ENCODE measurements at regions of chr2 and their contacts with region 1.

Region 1: DNA sequence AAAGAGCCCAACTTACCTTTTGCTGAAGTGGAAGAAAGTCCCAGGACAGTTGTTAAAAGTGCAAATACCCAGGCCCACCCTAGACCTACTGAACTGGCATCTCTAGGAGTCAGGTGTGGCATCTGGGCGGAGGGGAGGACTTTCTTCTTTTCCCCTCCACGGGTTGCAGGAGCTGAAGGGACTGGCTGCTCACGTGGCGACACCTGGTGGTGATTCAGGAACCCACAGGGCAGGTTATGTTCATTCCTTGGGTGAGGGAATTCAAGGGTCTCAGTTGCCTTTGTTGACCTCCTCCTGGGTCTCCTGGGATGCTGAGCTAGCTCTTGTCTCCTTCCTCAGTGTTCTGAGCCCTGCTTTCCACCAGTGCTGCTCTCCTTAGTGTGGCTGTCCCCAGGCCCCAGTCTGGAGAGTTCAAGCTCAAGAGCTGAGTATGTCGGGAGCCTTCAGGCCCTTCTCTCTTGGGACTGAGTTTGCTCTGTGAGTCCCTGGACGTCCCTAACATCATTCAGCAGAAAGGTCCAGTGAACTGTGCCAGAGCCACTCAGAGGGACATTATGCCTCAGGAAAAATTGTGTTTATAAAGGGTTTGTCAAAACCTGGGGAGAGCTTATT is 56.9 kb downstream of the DYSF start:
- DNase-seq: peak; percentile 35
- H3K4me3 ChIP-seq: no peak overlapping the region
- H3K27ac ChIP-seq: no peak overlapping the region
- H3K4me1 ChIP-seq: no peaks in the 10 kb centered on the region
- H3K27me3 ChIP-seq: no peaks in the 10 kb centered on the region
- CTCF ChIP-seq: peak; percentile 80 to 95

Region 2: DNA sequence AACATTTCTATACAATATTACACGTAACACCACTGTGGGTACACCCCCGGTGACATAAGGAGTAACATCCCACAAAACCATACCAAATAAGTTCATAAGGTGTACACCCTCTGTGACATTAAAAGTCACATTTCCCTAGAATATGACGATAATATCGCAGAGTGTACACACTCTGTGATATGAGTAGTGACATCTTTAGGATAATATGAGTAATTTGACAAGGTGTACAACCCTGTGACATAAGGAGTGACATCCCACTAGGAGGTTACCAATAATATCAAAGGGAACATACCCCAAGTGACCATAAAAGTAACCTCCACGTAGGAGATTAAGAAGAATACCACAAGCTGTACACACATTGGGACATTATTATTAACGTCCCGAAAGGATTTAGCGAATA is 491.7 kb before region 1 on chr2:
- CTCF ChIA-PET with region 1: no interaction called
- dilution Hi-C with region 1: no loop called
- in situ Hi-C with region 1: no loop called
- intact Hi-C with region 1: loop called (anchors 5 kb)
- DNase-seq: no peak
- H3K4me3 ChIP-seq: no peak overlapping the region
- H3K27ac ChIP-seq: no peak overlapping the region
- H3K4me1 ChIP-seq: peaks cover 6% of the 10 kb centered on the region
- H3K27me3 ChIP-seq: no peaks in the 10 kb centered on the region
- CTCF ChIP-seq: no peak

Region 3: DNA sequence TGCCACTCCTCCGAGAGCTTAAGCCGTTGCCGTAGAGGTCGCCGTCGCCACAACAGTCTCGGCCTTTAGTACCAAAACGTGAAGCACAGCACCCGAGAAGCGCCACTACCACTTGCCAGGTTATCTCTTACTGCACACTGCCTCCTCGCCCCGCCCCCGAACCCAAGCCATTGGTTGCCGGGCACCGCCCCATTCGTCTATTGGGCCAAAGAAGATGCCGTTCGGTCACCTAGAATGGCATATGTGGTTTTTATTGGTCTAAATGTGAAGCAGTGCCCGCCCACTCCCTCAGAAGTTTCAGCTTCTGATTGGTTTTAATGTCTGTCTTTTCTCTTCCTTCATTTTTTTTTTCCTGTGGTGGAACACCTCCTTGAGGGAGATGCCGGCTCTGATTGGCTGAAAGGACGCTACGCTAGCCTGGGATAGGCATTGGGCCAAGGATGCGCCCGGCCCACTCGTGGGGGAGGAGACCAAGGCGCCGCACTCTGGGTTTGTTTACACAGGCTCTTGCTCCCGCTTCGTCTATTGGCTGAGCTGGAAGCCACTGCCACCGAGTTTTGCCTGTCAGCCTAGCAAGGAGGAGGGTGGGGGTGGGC is 283.2 kb before region 1 on chr2 and contains the start of gene PAIP2B:
- CTCF ChIA-PET with region 1: no interaction called
- dilution Hi-C with region 1: no loop called
- in situ Hi-C with region 1: no loop called
- intact Hi-C with region 1: loop called (anchors 1 kb)
- DNase-seq: peak; percentile 100
- H3K4me3 ChIP-seq: peak within 1 kb of the TSS; percentile 83 to 92 (median 84)
- H3K27ac ChIP-seq: peak within 1 kb of the TSS; percentile 19
- H3K4me1 ChIP-seq: peaks cover 9% of the 10 kb centered on the region
- H3K27me3 ChIP-seq: peaks cover 3% of the 10 kb centered on the region
- CTCF ChIP-seq: no peak
- total RNA-seq, gene PAIP2B: 2.0 to 2.1 TPM

Region 4: DNA sequence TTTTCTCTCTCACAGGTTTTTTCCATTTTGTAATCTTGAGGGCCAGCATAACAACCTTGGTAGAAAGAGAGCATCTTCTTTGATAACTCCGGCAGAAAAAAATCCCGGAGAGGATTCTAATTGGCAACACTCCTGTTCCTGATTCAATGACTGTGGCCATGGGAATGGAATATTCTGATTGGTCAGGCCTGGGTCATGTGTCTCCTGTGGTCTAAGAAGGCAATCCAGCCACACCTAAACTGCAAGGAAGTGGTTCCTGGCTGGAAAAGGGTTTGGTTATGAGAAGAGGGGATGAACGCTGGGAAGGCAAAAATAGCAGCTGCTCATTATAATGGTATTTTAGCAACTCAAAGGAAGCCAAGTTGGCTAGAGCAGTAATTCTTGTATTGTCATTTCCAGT is 203.5 kb before region 1 on chr2:
- CTCF ChIA-PET with region 1: no interaction called
- dilution Hi-C with region 1: no loop called
- in situ Hi-C with region 1: loop called (anchors 10 kb)
- intact Hi-C with region 1: no loop called
- DNase-seq: peak; percentile 38
- H3K4me3 ChIP-seq: no peak overlapping the region
- H3K27ac ChIP-seq: no peak overlapping the region
- H3K4me1 ChIP-seq: peaks cover 16% of the 10 kb centered on the region
- H3K27me3 ChIP-seq: no peaks in the 10 kb centered on the region
- CTCF ChIP-seq: no peak

Region 5: GRCh38 chr2:71460595-71461303 is 49.6 kb before region 1 on chr2:
- CTCF ChIA-PET with region 1: interaction called, 23 read pairs
- dilution Hi-C with region 1: no loop called
- in situ Hi-C with region 1: loop called (anchors 5 kb)
- intact Hi-C with region 1: loop called (anchors 1 kb)
- DNase-seq: no peak
- H3K4me3 ChIP-seq: no peak overlapping the region
- H3K27ac ChIP-seq: no peak overlapping the region
- H3K4me1 ChIP-seq: peaks cover 26% of the 10 kb centered on the region
- H3K27me3 ChIP-seq: no peaks in the 10 kb centered on the region
- CTCF ChIP-seq: peak; percentile 48 to 62

Measured in mammary epithelial cell (primary cell).